Activated CD8-positive, alpha-beta T cell treated with anti-CD3 and anti-CD28 coated beads for 36 hours (primary cell): ENCODE measurements at regions of chr10 and their contacts with region 1.

Region 1: DNA sequence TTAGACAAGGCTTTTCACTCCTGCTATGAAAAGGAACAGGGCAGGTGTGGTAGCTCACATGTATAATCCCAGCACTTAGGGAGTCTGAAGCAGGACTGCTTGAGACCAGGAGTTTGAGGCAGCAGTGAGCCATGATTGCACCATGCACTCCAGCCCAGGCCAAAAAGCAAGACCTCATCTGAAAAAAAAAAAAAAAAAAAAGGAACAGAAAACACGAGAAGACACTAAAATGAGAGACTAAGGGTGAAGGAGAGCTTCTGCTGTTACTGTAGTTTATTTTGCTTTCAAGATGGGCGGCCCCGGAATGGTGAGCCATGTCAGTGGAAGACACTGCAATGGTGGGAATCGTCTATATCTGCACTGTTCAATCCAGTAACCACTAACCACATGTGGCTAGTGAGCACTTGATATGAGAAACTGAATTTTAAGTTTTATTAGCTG is 9.9 kb downstream of the PIP4K2A start:
- DNase-seq: no peak
- ATAC-seq: no peak
- H3K4me3 Mint-ChIP-seq: no peak overlapping the region
- H3K27ac Mint-ChIP-seq: peak overlapping the region; percentile 78
- H3K4me1 Mint-ChIP-seq: peaks cover 94% of the 10 kb centered on the region
- H3K27me3 Mint-ChIP-seq: no peaks in the 10 kb centered on the region
- CTCF ChIP-seq: no peak

Region 2: GRCh38 chr10:22682237-22683139 is 22.0 kb before region 1 on chr10:
- CTCF ChIA-PET with region 1: interaction called, 4 read pairs
- POLR2A ChIA-PET with region 1: interaction called, 13 read pairs
- intact Hi-C with region 1: no loop called
- DNase-seq: peak; percentile 85
- ATAC-seq: peak; percentile 42
- H3K4me3 Mint-ChIP-seq: peak overlapping the region; percentile 59
- H3K27ac Mint-ChIP-seq: peak overlapping the region; percentile 100
- H3K4me1 Mint-ChIP-seq: peaks cover 88% of the 10 kb centered on the region
- H3K27me3 Mint-ChIP-seq: no peaks in the 10 kb centered on the region
- CTCF ChIP-seq: no peak

Region 3: GRCh38 chr10:22693371-22693784 is 11.1 kb before region 1 on chr10:
- CTCF ChIA-PET with region 1: interaction called, 6 read pairs
- POLR2A ChIA-PET with region 1: interaction called, 16 read pairs
- intact Hi-C with region 1: no loop called
- DNase-seq: peak; percentile 67
- ATAC-seq: peak; percentile 80
- H3K4me3 Mint-ChIP-seq: peak overlapping the region; percentile 59
- H3K27ac Mint-ChIP-seq: peak overlapping the region; percentile 86
- H3K4me1 Mint-ChIP-seq: peaks cover 89% of the 10 kb centered on the region
- H3K27me3 Mint-ChIP-seq: no peaks in the 10 kb centered on the region
- CTCF ChIP-seq: no peak